Psoas muscle (tissue), 8 donors: ENCODE measurements at regions of chr11 and their contacts with region 1.

Region 1: DNA sequence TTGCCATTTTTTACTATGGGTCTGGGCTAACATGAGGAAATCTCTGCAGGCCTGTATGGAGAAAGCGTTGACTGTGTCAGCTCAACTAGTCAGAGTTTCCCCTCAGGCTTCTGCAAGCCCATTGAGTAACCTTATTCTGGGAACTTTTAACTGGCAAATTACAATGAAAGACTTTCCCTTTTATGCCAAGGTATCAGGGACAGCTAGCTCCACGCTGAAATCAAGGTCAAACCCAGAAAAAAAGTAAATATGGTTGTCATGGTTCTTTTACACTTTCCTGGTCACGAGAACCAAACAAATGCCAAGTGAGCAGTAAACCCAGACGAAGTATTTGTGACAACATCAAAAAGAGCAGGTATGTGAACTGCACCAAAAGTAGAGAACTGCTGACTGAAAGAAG is 13.8 kb downstream of the OSBP start:
- DNase-seq: no peak
- ATAC-seq: no peak
- H3K4me3 ChIP-seq: no peak overlapping the region
- H3K27ac ChIP-seq: no peak overlapping the region
- H3K4me1 ChIP-seq: peaks cover 29% of the 10 kb centered on the region
- H3K27me3 ChIP-seq: no peaks in the 10 kb centered on the region
- CTCF ChIP-seq: no peak

Region 2: DNA sequence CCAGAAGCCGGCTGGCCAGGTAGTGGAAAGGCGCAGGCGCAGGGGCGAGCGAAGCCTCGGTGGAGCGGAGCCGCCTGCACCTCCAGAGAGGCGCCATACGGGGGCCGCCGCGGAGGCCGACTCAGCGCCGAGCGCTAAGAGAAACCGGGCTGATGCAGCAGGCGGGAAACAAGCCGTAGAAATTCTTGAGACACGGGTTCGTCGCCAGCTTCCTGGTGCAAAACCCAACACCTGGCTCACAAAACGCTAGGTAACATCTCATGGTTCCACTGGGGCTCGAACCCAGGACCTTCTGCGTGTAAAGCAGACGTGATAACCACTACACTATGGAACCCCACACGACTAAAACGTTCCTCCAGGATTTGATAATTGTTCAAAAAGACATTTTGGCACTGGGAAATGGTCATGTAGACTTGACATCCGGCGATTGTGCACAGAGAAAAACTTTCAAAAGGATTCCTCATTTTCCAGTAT is 51.4 kb before region 1 on chr11:
- intact Hi-C with region 1: no loop called
- DNase-seq: peak; percentile 80 to 84
- ATAC-seq: peak; percentile 87 to 89 (median 88)
- H3K4me3 ChIP-seq: peak overlapping the region; percentile 66
- H3K27ac ChIP-seq: peak overlapping the region; percentile 87
- H3K4me1 ChIP-seq: no peaks in the 10 kb centered on the region
- H3K27me3 ChIP-seq: no peaks in the 10 kb centered on the region
- CTCF ChIP-seq: peak; percentile 51

Region 3: GRCh38 chr11:59654893-59655292 is 53.1 kb after region 1 on chr11:
- intact Hi-C with region 1: loop called in 1 of 2 experiments (anchors 5 kb)
- DNase-seq: no peak
- ATAC-seq: peak in 2 of 4 donors; percentile 70 to 83
- H3K4me3 ChIP-seq: no peak overlapping the region
- H3K27ac ChIP-seq: peak overlapping the region; percentile 76
- H3K4me1 ChIP-seq: peaks cover 8% of the 10 kb centered on the region
- H3K27me3 ChIP-seq: no peaks in the 10 kb centered on the region
- CTCF ChIP-seq: no peak

Region 4: GRCh38 chr11:59944720-59945119 is 342.9 kb after region 1 on chr11:
- intact Hi-C with region 1: no loop called
- DNase-seq: no peak
- ATAC-seq: no peak
- H3K4me3 ChIP-seq: no peak overlapping the region
- H3K27ac ChIP-seq: no peak overlapping the region
- H3K4me1 ChIP-seq: no peaks in the 10 kb centered on the region
- H3K27me3 ChIP-seq: no peaks in the 10 kb centered on the region
- CTCF ChIP-seq: no peak